GM10248 (cell line): ENCODE measurements at regions of chr4 and their contacts with region 1.

Region 1: GRCh38 chr4:128553686-128554515 is 255.6 kb upstream of the JADE1 start:
- DNase-seq: no peak
- CTCF ChIP-seq: no peak

Region 2: GRCh38 chr4:127822430-127822829 is 731.5 kb before region 1 on chr4:
- CTCF ChIA-PET with region 1: no interaction called
- POLR2A ChIA-PET with region 1: no interaction called
- DNase-seq: no peak
- CTCF ChIP-seq: no peak

Region 3: GRCh38 chr4:128416921-128417320 is 137.0 kb before region 1 on chr4:
- CTCF ChIA-PET with region 1: no interaction called
- POLR2A ChIA-PET with region 1: no interaction called
- DNase-seq: no peak
- CTCF ChIP-seq: no peak

Region 4: GRCh38 chr4:128528793-128529553 is 24.9 kb before region 1 on chr4:
- CTCF ChIA-PET with region 1: interaction called, 12 read pairs
- POLR2A ChIA-PET with region 1: interaction called, 3 read pairs
- DNase-seq: no peak
- CTCF ChIP-seq: no peak

Region 5: DNA sequence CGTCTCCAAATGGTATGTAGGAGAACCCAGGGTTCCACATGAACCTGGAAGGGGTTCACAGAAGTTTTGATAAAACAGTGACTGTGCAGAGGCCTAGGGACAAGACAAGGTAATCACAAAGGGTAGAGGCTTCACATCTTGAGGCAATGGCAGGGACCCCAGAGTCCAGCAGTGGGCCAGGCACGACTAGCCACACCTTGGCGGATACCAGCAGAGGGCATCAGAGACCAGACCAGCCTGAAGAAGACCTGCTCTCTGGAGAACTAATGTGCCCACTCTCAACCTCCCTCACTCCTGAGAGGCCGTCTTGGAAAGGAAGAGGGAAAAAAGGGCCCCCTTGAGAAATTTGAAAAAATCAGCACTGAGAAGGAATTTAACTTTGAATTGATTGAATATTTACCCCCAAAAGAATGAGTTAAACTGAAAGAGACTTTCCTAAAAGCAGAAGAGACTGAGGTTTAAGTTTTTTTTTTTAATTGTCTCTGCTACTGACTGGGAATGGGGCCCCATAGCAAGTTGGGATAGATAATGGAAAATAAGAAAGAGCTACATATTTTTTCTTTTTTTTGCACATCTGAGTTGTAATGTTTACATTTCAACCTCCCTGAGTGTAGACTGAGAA is 11.8 kb after region 1 on chr4:
- CTCF ChIA-PET with region 1: interaction called, 19 read pairs
- POLR2A ChIA-PET with region 1: interaction called, 3 read pairs
- DNase-seq: peak; percentile 41
- CTCF ChIP-seq: peak; percentile 57

Region 6: DNA sequence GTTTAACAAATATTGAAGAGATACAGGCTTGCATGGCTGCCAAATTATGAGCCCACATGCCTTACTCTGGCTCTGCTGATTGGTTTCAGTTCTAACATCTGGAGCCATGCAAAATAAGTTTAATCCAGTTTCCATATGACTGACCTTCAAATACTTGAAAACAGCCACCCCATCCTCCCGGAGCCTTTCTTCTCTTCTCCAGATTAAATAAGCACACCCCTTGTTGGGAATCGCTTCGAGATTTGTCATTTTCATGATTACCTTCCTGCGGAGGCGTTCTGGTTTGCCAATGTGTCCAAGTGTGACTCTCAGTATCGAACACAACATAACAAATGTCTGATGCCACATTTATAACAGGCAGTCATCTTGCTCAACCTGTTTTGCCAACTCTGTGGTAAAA is 154.0 kb after region 1 on chr4:
- CTCF ChIA-PET with region 1: no interaction called
- POLR2A ChIA-PET with region 1: no interaction called
- DNase-seq: no peak
- CTCF ChIP-seq: no peak

Region 7: GRCh38 chr4:128831531-128832242 is 277.8 kb after region 1 on chr4:
- CTCF ChIA-PET with region 1: no interaction called
- POLR2A ChIA-PET with region 1: no interaction called
- DNase-seq: peak; percentile 54
- CTCF ChIP-seq: no peak